ENCODE measurements at regions of chr20 and their contacts with region 1.

Region 1: GRCh38 chr20:52379723-52380336 is 188.3 kb upstream of the ZFP64 start:
- DNase-seq: peak; percentile 27 to 53 (median 38)
- ATAC-seq: no peak
- H3K4me3 ChIP-seq: no peak overlapping the region
- H3K27ac ChIP-seq: no peak overlapping the region
- H3K4me1 ChIP-seq: no peaks in the 10 kb centered on the region
- H3K27me3 ChIP-seq: no peaks in the 10 kb centered on the region
- CTCF ChIP-seq: peak; percentile 68 to 80 (median 77)
- EP300 ChIP-seq: no peak
- POLR2A ChIP-seq: no peak
- RAD21 ChIP-seq: peak; percentile 41 to 64

Region 2: DNA sequence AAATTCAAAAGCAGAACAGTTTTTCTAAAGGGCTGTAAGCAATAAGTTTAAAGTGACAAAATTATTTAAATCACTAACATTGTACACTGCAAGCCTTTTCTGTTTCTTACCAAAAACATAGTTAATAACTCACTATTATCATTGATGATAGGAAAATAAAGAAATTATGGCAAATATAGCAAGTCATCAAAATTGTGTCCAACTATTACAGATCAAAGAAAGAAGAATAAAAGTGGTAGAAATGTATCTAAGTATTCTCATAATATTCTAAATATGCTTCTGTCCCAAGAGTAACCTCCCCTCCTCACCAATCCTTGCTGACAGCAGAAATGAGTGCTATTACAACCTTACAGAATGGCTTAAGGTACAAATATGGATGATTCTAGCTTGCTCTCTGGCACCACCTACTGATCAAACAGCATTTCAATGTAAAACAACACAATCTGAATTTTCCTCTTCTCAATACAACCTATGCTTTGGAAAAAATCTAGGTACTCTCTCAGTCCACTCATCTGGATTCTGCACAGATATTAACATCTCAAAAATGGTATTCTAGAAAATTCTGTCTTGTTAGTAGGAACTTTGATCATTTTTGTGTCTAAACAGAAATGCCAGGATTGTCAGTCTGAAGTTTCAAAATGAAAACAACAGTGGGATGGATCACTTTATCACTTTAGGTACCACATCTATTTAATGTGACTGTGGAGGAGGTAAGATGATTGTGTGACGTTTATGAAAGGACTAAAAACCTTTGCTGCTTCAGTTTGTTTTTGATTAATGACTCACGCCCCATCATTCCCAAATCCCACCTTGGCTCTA is 229.2 kb before region 1 on chr20:
- CTCF ChIA-PET with region 1: no interaction called
- POLR2A ChIA-PET with region 1: no interaction called
- in situ Hi-C with region 1: no loop called
- intact Hi-C with region 1: no loop called
- DNase-seq: peak; percentile 37 to 55 (median 39)
- ATAC-seq: peak; percentile 75
- H3K4me3 ChIP-seq: no peak overlapping the region
- H3K27ac ChIP-seq: no peak overlapping the region
- H3K4me1 ChIP-seq: no peaks in the 10 kb centered on the region; a peak in 1 of 5 replicates
- H3K27me3 ChIP-seq: no peaks in the 10 kb centered on the region
- CTCF ChIP-seq: peak; percentile 50 to 71 (median 67); a peak in 5 of 6 replicates
- EP300 ChIP-seq: no peak
- POLR2A ChIP-seq: no peak
- RAD21 ChIP-seq: peak; percentile 58 to 62

Region 3: DNA sequence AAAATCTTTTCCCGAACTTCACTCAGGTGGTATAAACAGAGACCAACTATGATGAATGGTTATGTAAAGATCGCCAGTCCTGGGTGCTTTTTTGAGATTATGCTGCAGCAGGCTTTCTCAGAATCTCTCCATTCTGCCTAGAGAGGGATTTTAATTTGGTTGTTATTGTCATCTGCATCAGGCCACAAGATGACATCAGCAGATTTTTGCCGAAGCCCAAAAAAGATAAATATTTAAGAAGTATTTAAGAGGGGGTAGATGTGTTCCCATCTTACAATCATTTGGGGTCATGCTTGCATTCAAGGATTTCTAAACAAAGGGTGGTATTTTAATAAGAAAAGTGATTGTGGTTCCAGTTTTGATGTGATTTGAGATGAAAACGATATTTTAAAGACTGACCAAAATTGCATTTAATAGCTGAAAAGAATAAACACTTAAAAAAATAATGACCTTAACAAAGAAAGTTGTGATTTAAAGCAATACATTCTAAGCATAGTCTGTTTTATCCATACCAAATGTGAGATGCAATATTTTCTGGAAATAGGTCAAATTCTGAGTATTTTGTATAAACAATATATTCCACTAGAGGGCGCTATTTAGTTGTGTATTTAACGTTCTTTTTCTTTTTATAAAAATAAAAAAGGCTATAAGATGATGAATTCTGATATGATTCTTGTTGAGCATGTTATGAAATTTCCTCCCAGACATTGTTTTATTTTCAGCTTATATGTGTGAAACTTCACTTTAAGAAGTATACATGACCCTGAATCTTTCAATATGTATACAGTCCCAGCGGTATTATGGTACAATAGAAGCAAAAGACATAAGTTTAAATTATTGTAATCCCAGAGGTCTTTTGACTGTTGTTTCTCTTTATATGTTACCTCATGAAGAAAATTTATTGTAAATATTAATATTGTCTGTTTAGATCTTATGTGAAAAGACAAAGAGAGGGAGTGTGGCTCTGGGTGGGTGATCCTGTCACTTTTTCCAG is 137.3 kb before region 1 on chr20:
- CTCF ChIA-PET with region 1: no interaction called
- POLR2A ChIA-PET with region 1: no interaction called
- in situ Hi-C with region 1: no loop called
- intact Hi-C with region 1: loop called (anchors 2 kb)
- DNase-seq: peak in 2 of 4 experiments; percentile 6 to 18
- ATAC-seq: no peak
- H3K4me3 ChIP-seq: no peak overlapping the region
- H3K27ac ChIP-seq: no peak overlapping the region
- H3K4me1 ChIP-seq: peaks cover 0 to 4% of the 10 kb centered on the region in 2 experiments; a peak in 1 of 5 replicates
- H3K27me3 ChIP-seq: no peaks in the 10 kb centered on the region
- CTCF ChIP-seq: peak in 1 of 3 experiments; percentile 61; a peak in 3 of 6 replicates
- EP300 ChIP-seq: no peak
- POLR2A ChIP-seq: no peak
- RAD21 ChIP-seq: peak; percentile 49 to 62

Region 4: DNA sequence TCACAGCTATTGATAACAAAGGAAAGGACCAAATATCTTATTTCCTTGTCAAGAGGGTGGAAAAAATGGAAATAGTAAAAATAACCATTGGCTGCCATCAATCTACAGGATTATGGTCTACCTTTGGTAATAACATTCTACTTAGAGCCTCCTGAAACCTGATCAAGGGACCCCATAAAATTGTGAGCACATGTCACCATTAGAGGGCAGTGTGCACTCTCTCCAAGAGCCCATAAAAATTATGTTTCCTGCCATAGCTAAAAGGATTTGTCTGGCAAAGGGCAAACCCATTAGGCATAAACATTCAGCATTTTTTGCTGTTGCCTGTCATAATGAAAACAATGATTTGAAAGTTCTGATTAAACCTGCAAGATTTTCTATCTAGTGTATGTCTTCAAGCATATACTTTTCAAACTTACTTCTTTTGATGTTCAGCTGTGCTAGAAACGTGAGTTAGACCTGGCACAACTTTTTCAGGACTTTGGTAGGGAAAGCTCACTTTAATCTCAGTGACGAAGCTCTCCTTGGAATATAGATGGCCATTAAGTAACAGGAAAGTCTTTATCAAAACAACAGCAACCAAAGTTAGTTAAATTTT is 67.6 kb before region 1 on chr20:
- CTCF ChIA-PET with region 1: no interaction called
- POLR2A ChIA-PET with region 1: no interaction called
- in situ Hi-C with region 1: no loop called
- intact Hi-C with region 1: loop called (anchors 2 kb)
- DNase-seq: peak; percentile 35 to 61 (median 51)
- ATAC-seq: peak; percentile 74
- H3K4me3 ChIP-seq: no peak overlapping the region
- H3K27ac ChIP-seq: no peak overlapping the region
- H3K4me1 ChIP-seq: no peaks in the 10 kb centered on the region
- H3K27me3 ChIP-seq: no peaks in the 10 kb centered on the region
- CTCF ChIP-seq: peak; percentile 63 to 69 (median 69)
- EP300 ChIP-seq: no peak
- POLR2A ChIP-seq: no peak
- RAD21 ChIP-seq: peak; percentile 68 to 69